HCT116 (cell line): ENCODE measurements at regions of chr5 and their contacts with region 1.

Region 1: GRCh38 chr5:126837906-126838539 is 61.1 kb downstream of the LMNB1 start:
- DNase-seq: no peak
- ATAC-seq: no peak
- H3K4me3 ChIP-seq: no peak overlapping the region
- H3K27ac ChIP-seq: no peak overlapping the region
- H3K4me1 ChIP-seq: no peaks in the 10 kb centered on the region
- H3K27me3 ChIP-seq: no peaks in the 10 kb centered on the region
- CTCF ChIP-seq: no peak
- POLR2A ChIP-seq: no peak
- RAD21 ChIP-seq: peak; percentile 28; the same call in 1 of the 2 replicates

Region 2: DNA sequence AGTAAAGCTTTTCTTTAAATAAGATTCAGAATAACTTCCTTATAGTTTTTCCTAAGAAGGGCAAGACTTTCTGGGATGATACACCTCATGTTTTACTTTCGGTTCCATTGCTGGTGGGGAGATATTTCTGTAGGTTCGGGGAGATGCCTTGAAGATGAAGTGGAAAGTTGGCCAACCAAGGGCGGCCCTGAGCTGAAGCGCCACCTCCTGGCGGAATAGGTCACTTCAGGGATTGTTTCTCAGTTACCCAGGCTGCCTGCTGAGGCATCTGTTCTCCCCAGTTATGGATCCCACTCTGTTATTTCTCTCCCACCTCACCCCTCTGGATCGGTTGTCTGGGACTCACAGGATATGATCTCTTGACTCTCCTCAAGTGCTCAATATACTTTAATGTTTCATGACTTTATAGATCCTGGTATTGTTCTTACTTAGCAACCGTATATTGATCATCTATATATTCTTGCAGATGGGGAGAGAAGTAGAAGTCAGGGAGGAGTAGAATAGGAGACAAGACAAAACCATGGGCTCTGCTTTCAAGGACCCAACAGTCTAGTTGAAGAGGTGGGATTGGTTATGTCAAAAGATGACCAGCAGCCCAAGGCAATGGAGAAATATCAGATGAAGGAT is 475.9 kb after region 1 on chr5:
- CTCF ChIA-PET with region 1: no interaction called
- POLR2A ChIA-PET with region 1: no interaction called
- RAD21 ChIA-PET with region 1: no interaction called
- intact Hi-C with region 1: loop called (anchors 2 kb)
- DNase-seq: peak; percentile 33
- ATAC-seq: peak; percentile 99
- H3K4me3 ChIP-seq: no peak overlapping the region
- H3K27ac ChIP-seq: no peak overlapping the region
- H3K4me1 ChIP-seq: no peaks in the 10 kb centered on the region
- H3K27me3 ChIP-seq: no peaks in the 10 kb centered on the region
- CTCF ChIP-seq: peak; percentile 65 to 85 (median 84)
- POLR2A ChIP-seq: no peak
- RAD21 ChIP-seq: peak; percentile 82

Region 3: GRCh38 chr5:127441799-127442484 is 603.9 kb after region 1 on chr5:
- CTCF ChIA-PET with region 1: no interaction called
- POLR2A ChIA-PET with region 1: no interaction called
- RAD21 ChIA-PET with region 1: no interaction called
- intact Hi-C with region 1: loop called (anchors 5 kb)
- DNase-seq: no peak
- ATAC-seq: peak; percentile 32; the same call in 1 of the 2 replicates
- H3K4me3 ChIP-seq: no peak overlapping the region
- H3K27ac ChIP-seq: no peak overlapping the region
- H3K4me1 ChIP-seq: no peaks in the 10 kb centered on the region
- H3K27me3 ChIP-seq: no peaks in the 10 kb centered on the region
- CTCF ChIP-seq: peak; percentile 25 to 59 (median 42); a peak in 4 of 6 replicates
- POLR2A ChIP-seq: no peak
- RAD21 ChIP-seq: peak; percentile 65